SK-N-SH (cell line): ENCODE measurements at regions of chr4 and their contacts with region 1.

Region 1: DNA sequence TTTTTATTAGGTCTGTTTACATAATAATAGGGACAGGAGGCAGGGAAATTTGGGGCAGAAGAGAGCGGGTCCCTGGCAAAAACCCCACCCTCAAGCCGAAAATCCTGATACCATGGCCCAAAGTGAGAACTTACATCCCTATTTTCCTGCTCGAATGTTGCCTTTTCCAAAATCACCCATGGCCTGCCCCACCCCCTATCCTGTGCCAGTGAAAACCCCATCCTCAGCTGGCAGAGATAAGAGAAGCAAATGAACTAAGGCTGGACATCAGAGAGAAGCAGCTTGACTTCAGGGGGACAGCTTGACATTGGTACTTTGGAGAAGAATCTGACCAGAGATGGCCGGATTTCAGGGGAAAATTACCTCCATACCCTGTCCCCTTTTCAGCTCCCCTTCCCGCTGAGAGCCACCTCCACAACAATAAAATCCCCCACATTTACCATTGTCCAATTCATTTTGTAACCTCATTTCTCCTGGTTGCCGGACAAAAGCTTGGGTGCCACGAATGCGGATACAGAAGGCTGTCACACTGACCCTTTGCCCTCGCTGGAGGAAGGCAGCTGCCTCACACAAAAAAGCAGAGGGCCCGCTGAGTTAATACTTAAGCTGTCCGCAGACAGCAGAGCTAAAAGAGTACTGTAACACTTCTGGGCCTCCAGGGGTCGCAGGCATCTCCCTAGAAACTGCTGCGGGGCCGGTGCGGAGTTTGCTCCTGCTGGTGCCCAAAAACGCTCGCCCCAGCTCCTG is 196.2 kb downstream of the SNCA start:
- DNase-seq: peak; percentile 65
- H3K4me3 ChIP-seq: peak overlapping the region; percentile 17 to 38; a peak in 2 of 4 replicates
- H3K27ac ChIP-seq: no peak overlapping the region
- H3K4me1 ChIP-seq: peaks cover 0 to 4% of the 10 kb centered on the region in 2 experiments; a peak in 2 of 4 replicates
- H3K27me3 ChIP-seq: no peaks in the 10 kb centered on the region
- CTCF ChIP-seq: peak; percentile 70
- EP300 ChIP-seq: no peak
- RAD21 ChIP-seq: peak; percentile 61

Region 2: DNA sequence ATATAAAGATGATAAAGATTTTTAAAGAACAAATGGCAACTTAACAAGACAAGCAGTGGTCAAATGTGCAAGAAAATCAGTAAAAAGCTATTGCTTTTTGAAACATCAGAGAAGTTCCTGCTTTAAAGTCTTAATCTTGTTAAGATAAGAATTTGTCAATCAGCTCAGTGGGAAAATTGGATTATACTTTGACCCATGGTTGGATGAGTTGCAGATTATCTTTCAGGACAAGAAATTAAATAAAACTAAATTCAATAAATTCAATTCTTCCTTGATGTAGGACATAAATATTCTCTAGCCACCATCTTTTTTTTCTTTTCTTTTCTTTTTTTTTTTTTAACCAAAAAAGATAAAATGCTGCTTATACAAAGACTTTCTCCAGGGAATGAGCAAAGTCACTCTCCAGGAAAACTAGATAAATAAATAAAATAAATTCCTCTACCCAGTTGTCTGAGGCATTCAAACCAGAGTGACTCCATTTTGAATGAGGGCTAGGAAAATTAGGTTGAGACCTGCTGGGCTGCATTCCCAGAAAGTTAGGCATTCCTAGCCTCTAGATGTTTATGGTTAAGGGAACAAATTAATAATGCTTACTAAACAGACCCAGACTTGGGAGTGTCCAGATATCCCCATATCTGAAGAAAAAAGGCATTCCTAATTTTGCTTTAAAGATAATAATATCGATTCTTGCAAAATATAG is 15.0 kb before region 1 on chr4:
- CTCF ChIA-PET with region 1: interaction called, 20 read pairs
- POLR2A ChIA-PET with region 1: no interaction called
- DNase-seq: no peak
- H3K4me3 ChIP-seq: no peak overlapping the region
- H3K27ac ChIP-seq: no peak overlapping the region
- H3K4me1 ChIP-seq: no peaks in the 10 kb centered on the region; a peak in 1 of 4 replicates
- H3K27me3 ChIP-seq: peaks cover 6% of the 10 kb centered on the region; the same call in 1 of the 2 replicates
- CTCF ChIP-seq: no peak
- EP300 ChIP-seq: no peak; a peak in 1 of 4 replicates
- RAD21 ChIP-seq: no peak

Region 3: DNA sequence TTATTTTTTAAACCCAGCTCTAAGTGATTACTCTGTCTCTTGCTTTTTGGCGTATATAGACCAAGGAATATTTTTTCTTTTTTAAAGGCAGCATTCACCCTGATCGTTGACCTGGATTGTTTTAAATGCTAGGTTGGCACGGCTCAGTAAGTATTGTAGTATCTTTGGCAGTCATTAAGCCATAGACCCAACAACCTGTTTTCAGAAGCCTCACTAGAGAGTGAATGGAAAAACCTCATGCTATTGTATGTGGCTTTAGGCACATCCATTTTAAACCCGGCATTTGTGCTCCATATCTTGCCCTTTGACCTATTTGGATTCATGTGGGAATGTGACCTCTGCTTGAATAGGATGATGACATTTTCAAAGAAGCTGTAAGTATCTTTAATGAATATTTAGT is 12.2 kb after region 1 on chr4:
- CTCF ChIA-PET with region 1: interaction called, 17 read pairs
- POLR2A ChIA-PET with region 1: no interaction called
- DNase-seq: no peak
- H3K4me3 ChIP-seq: no peak overlapping the region
- H3K27ac ChIP-seq: no peak overlapping the region
- H3K4me1 ChIP-seq: no peaks in the 10 kb centered on the region
- H3K27me3 ChIP-seq: no peaks in the 10 kb centered on the region
- CTCF ChIP-seq: no peak
- EP300 ChIP-seq: no peak
- RAD21 ChIP-seq: no peak